Transverse colon (tissue), 4 donors: ENCODE measurements at regions of chr2 and their contacts with region 1.

Region 1: GRCh38 chr2:148552675-148553331 is 91.7 kb upstream of the EPC2 start:
- DNase-seq: no peak
- H3K4me3 ChIP-seq: peak overlapping the region; percentile 2 to 45 (median 18)
- H3K27ac ChIP-seq: no peak overlapping the region
- H3K4me1 ChIP-seq: peaks cover 0 to 5% (median 0%) of the 10 kb centered on the region in 4 donors
- H3K27me3 ChIP-seq: no peaks in the 10 kb centered on the region
- CTCF ChIP-seq: no peak
- EP300 ChIP-seq: no peak
- POLR2A ChIP-seq: no peak

Region 2: GRCh38 chr2:149129433-149129832 is 576.6 kb after region 1 on chr2:
- in situ Hi-C with region 1: no loop called
- intact Hi-C with region 1: loop called (anchors 10 kb)
- DNase-seq: no peak
- H3K4me3 ChIP-seq: no peak overlapping the region
- H3K27ac ChIP-seq: no peak overlapping the region
- H3K4me1 ChIP-seq: peaks cover 0 to 10% (median 2%) of the 10 kb centered on the region in 4 donors
- H3K27me3 ChIP-seq: no peaks in the 10 kb centered on the region
- CTCF ChIP-seq: no peak
- EP300 ChIP-seq: no peak
- POLR2A ChIP-seq: no peak